WTC11 (cell line): ENCODE measurements at regions of chr12 and their contacts with region 1.

Region 1: GRCh38 chr12:132327351-132328171 is 1.8 kb downstream of the GALNT9 start:
- DNase-seq: no peak
- ATAC-seq: no peak
- H3K4me3 Mint-ChIP-seq: no peak overlapping the region
- H3K27ac Mint-ChIP-seq: no peak overlapping the region
- H3K4me1 Mint-ChIP-seq: no peaks in the 10 kb centered on the region
- H3K27me3 Mint-ChIP-seq: peaks cover 79% of the 10 kb centered on the region
- CTCF ChIP-seq: no peak

Region 2: GRCh38 chr12:132342251-132343227 is 15.0 kb after region 1 on chr12:
- CTCF ChIA-PET with region 1: interaction called, 26 read pairs
- POLR2A ChIA-PET with region 1: no interaction called
- DNase-seq: peak; percentile 68
- ATAC-seq: peak; percentile 89
- H3K4me3 Mint-ChIP-seq: no peak overlapping the region
- H3K27ac Mint-ChIP-seq: peak overlapping the region; percentile 65; the same call in 1 of the 2 replicates
- H3K4me1 Mint-ChIP-seq: no peaks in the 10 kb centered on the region
- H3K27me3 Mint-ChIP-seq: peaks cover 37% of the 10 kb centered on the region
- CTCF ChIP-seq: peak; percentile 33; the same call in 1 of the 2 replicates

Region 3: DNA sequence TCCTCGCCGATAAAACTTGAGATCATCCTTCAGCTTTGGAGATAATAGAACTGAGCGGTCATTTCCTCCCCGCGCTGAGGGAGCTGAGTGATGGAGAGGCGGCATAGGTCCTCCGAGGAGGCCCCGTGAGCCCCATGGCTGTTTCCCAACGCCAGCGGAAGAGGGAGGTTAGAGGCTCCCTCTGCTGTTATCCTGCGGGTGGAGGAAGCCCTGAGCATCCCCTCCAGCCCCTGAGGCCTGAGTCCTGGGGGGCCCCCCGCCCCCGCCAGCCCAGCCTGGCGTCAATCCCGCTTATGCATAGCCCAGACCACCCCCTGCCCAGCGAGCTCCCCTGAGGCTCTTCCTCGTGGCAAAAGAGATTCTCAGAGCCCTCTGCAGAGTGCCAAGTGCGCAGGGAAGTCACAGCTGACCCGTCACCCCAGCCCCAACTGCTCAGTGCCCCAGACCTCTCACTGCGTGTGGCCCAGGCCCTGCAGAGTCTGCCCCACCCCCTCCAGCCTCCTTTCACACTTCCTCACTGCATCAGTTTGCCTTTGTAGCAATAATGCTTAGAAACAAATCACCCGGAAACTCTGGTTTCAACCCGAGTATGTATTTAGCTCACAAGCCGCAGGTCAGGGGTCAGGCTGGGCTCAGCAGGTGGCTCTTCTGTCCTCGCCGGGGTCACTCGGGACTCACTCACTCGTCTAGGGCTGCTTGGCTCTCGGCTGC is 46.5 kb after region 1 on chr12:
- CTCF ChIA-PET with region 1: interaction called, 16 read pairs
- POLR2A ChIA-PET with region 1: interaction called, 3 read pairs
- DNase-seq: no peak
- ATAC-seq: peak; percentile 65
- H3K4me3 Mint-ChIP-seq: no peak overlapping the region
- H3K27ac Mint-ChIP-seq: no peak overlapping the region
- H3K4me1 Mint-ChIP-seq: peaks cover 14% of the 10 kb centered on the region
- H3K27me3 Mint-ChIP-seq: peaks cover 85% of the 10 kb centered on the region
- CTCF ChIP-seq: no peak

Region 4: DNA sequence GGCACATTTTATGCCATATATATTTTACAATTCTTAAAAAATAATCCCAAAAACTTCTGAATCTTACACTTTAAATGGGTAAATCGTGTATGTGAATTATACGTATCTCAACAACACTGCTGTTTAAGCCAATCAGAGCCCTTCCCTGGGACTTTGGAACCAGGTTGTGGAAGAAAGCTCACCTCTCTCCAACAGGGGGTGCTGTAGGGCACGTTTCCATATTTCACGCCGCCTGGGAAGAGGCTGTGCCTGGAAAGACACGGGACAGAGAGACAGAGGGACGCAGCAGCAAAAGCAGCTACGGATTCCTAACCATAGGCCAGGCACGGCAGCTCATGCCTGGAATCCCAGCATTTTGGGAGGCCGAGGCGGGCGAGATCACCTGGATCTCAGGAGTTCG is 133.0 kb after region 1 on chr12:
- CTCF ChIA-PET with region 1: no interaction called
- POLR2A ChIA-PET with region 1: no interaction called
- DNase-seq: peak; percentile 58
- ATAC-seq: peak; percentile 71
- H3K4me3 Mint-ChIP-seq: no peak overlapping the region
- H3K27ac Mint-ChIP-seq: no peak overlapping the region
- H3K4me1 Mint-ChIP-seq: no peaks in the 10 kb centered on the region
- H3K27me3 Mint-ChIP-seq: peaks cover 33% of the 10 kb centered on the region
- CTCF ChIP-seq: peak; percentile 37; the same call in 1 of the 2 replicates

Region 5: GRCh38 chr12:132776816-132777568 is 449.4 kb after region 1 on chr12:
- CTCF ChIA-PET with region 1: no interaction called
- POLR2A ChIA-PET with region 1: no interaction called
- DNase-seq: no peak
- ATAC-seq: no peak
- H3K4me3 Mint-ChIP-seq: no peak overlapping the region
- H3K27ac Mint-ChIP-seq: no peak overlapping the region; the same call in 1 of the 2 replicates
- H3K4me1 Mint-ChIP-seq: no peaks in the 10 kb centered on the region
- H3K27me3 Mint-ChIP-seq: no peaks in the 10 kb centered on the region
- CTCF ChIP-seq: no peak